Endothelial cell of umbilical vein (primary cell): ENCODE measurements at regions of chr1 and their contacts with region 1.

Region 1: GRCh38 chr1:212608209-212608955 is at the start of gene ATF3:
- DNase-seq: peak; percentile 98
- H3K4me3 ChIP-seq: peak within 1 kb of the TSS; percentile 51 to 77 (median 52)
- H3K27ac ChIP-seq: peak within 1 kb of the TSS; percentile 76
- H3K4me1 ChIP-seq: peaks cover 27% of the 10 kb centered on the region
- H3K27me3 ChIP-seq: peaks cover 38 to 44% of the 10 kb centered on the region in 2 experiments
- CTCF ChIP-seq: no peak
- POLR2A ChIP-seq: peak; percentile 98
- total RNA-seq, gene ATF3: 6.1 and 10.7 TPM in 2 replicates

Region 2: GRCh38 chr1:212482384-212483281 is 125.7 kb before region 1 on chr1:
- CTCF ChIA-PET with region 1: interaction called, 67 read pairs
- POLR2A ChIA-PET with region 1: interaction called, 42 read pairs
- dilution Hi-C with region 1: no loop called
- intact Hi-C with region 1: loop called (anchors 1 kb)
- DNase-seq: no peak
- H3K4me3 ChIP-seq: no peak overlapping the region
- H3K27ac ChIP-seq: no peak overlapping the region
- H3K4me1 ChIP-seq: peaks cover 13% of the 10 kb centered on the region
- H3K27me3 ChIP-seq: no peaks in the 10 kb centered on the region
- CTCF ChIP-seq: no peak
- POLR2A ChIP-seq: no peak

Region 3: DNA sequence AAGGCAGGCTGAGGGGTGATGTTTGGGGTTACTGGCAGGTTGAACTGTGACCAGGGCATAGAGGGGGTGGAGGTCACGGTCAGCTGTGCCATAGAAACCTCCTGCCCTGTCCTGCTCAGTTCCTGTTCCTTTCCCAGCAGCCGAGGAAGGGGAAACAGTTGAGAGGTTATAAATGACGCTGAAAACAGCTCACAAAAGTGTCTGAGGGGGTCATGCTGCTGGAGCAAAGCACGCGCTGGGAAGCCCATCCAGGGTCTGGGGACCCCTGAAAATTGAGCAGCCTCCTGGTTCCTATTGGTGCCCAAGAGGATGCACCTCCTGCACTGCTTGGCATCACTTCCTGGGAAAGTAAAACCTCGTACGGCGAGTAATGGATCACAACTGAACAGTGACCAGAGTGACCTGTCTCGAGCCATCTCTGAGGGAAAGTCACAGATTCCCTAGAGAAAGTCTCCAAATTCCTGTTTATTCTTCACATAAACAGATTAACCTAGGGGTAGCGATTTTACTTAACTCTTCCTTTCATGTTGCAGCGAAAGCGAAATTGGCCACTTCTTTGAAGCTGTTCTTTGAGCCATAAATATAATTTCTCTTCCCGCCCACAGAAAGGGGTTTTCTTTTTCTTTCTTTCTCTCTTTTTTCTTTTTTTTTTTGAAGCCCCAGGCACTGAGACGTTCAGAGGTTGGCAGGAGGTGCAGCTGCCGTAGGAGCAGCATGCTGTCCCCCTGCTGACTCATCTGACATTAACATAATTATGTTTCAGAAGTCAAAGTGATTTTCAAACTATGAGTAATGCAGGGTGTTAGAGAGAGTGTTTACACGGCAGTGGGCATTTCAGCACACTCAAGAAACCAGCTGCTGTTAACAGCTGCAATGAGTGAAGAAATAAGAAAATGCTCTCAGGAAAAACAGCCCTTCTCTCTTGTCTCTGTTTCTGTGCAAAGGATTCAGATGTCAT is 41.6 kb before region 1 on chr1:
- CTCF ChIA-PET with region 1: interaction called, 7 read pairs
- POLR2A ChIA-PET with region 1: interaction called, 16 read pairs
- dilution Hi-C with region 1: no loop called
- intact Hi-C with region 1: loop called (anchors 1 kb)
- DNase-seq: peak; percentile 87
- H3K4me3 ChIP-seq: peak overlapping the region in 2 of 3 experiments; percentile 45 to 76
- H3K27ac ChIP-seq: peak overlapping the region; percentile 70
- H3K4me1 ChIP-seq: peaks cover 18% of the 10 kb centered on the region
- H3K27me3 ChIP-seq: no peaks in the 10 kb centered on the region
- CTCF ChIP-seq: no peak
- POLR2A ChIP-seq: peak; percentile 47

Region 4: DNA sequence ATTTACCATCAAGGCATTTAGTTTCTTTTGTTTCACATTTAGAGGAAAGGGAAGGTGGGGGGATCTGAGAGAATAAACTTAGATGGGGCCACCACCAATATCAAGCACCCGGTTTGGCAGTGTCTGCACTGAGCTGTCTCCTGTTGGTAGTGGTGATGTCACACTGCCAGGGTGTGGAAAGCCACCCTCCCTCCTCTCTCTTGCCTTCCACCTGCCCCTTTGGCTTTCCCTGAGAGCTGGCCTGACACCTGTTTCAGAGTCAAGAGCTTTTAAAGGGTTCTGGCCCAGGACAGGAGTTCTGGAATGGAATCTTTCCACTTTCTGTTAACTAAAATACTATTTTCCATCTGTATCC is 13.5 kb after region 1 on chr1:
- CTCF ChIA-PET with region 1: interaction called, 11 read pairs
- POLR2A ChIA-PET with region 1: interaction called, 38 read pairs
- dilution Hi-C with region 1: no loop called
- intact Hi-C with region 1: loop called (anchors 1 kb)
- DNase-seq: no peak
- H3K4me3 ChIP-seq: no peak overlapping the region
- H3K27ac ChIP-seq: no peak overlapping the region
- H3K4me1 ChIP-seq: peaks cover 13% of the 10 kb centered on the region
- H3K27me3 ChIP-seq: peaks cover 0 to 8% of the 10 kb centered on the region in 2 experiments
- CTCF ChIP-seq: no peak
- POLR2A ChIP-seq: no peak

Region 5: DNA sequence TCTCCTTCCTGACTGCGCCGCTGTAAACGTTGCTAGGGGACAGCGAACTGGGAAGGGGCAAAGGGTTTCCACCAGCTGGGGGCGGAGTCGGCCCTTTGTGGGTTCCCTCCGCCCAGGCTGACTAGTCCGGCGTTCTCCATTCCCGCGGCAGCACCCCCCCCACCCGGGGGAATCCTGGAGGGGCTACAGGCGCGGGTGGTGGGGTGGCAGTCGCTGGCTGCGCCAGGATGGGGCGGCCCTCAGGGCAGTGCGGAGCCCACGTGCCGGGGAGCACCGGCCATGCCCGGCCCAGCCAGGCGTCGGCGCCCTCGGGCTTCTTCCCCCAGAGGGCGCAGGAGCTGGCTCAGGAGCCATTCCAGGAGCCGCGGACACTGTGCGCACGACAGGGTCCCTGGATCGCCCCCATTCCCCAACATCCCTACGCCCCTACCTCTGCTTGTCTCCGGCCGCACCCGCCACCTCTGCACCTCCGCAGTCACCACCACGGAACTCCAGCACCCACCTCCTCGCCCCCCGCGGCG is 90.8 kb after region 1 on chr1:
- CTCF ChIA-PET with region 1: interaction called, 13 read pairs
- POLR2A ChIA-PET with region 1: interaction called, 6 read pairs
- dilution Hi-C with region 1: no loop called
- intact Hi-C with region 1: loop called (anchors 1 kb)
- DNase-seq: peak; percentile 18
- H3K4me3 ChIP-seq: peak overlapping the region in 1 of 3 experiments; percentile 38
- H3K27ac ChIP-seq: no peak overlapping the region
- H3K4me1 ChIP-seq: peaks cover 16% of the 10 kb centered on the region
- H3K27me3 ChIP-seq: peaks cover 37 to 62% of the 10 kb centered on the region in 2 experiments
- CTCF ChIP-seq: peak; percentile 33 to 75
- POLR2A ChIP-seq: no peak